Activated CD8-positive, alpha-beta T cell treated with anti-CD3 and anti-CD28 coated beads, Interleukin-2, amount 10 ng/mL, durations not matched to agents 7 days and 5 days (primary cell): ENCODE measurements at regions of chr6 and their contacts with region 1.

Region 1: DNA sequence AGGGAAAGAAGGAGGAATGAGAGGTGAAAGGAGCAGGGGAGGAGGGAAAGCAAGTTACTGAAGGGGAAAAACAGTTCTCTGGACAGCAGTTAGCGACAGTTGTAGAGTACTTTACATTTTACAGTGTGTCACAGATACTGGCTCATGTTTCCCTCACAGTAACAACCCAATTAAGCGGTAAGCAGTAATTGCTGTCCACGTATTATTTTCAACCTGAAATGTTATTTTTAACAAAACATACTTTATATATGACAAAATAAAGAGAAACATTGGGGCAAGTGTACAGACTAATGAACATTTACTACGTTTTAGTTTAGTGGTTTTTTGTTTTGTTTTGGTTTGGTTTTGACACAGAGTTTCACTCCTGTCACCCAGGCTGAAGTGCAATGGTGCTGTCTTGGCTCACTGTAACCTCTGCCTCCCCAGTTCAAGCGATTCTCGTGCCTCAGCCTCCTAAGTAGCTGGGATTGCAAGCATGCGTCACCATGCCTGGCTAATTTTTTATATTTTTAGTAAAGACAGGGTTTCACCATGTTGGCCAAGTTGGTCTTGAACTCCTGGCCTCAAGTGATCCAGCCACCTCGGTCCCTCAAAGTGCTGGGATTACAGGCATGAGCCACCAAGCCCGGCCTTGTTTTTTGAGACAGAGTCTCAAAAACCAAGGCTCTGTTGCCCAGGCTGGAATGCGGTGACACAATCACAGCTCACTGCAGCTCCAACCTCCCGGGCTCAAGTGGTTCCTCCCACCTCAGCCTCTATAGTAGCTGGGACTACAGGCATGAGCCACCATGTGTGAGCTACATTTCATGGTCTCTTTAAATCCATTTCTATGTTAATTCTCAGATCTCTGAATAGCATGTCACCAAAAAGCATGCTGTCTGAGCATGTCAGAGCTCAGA is 22.6 kb upstream of the BTN3A2 start:
- DNase-seq: no peak
- ATAC-seq: peak; percentile 25
- H3K4me3 Mint-ChIP-seq: peak overlapping the region; percentile 71
- H3K27ac Mint-ChIP-seq: peak overlapping the region; percentile 58
- H3K4me1 Mint-ChIP-seq: peaks cover 33% of the 10 kb centered on the region
- H3K27me3 Mint-ChIP-seq: peaks cover 4% of the 10 kb centered on the region

Region 2: GRCh38 chr6:26055670-26056582 is 286.4 kb before region 1 on chr6:
- CTCF ChIA-PET with region 1: no interaction called
- POLR2A ChIA-PET with region 1: no interaction called
- DNase-seq: peak; percentile 94
- ATAC-seq: peak; percentile 79
- H3K4me3 Mint-ChIP-seq: peak overlapping the region; percentile 87
- H3K27ac Mint-ChIP-seq: peak overlapping the region; percentile 100
- H3K4me1 Mint-ChIP-seq: peaks cover 41% of the 10 kb centered on the region
- H3K27me3 Mint-ChIP-seq: no peaks in the 10 kb centered on the region

Region 3: GRCh38 chr6:26122793-26123674 is 219.3 kb before region 1 on chr6:
- CTCF ChIA-PET with region 1: no interaction called
- POLR2A ChIA-PET with region 1: no interaction called
- DNase-seq: peak; percentile 98
- ATAC-seq: peak; percentile 50
- H3K4me3 Mint-ChIP-seq: peak overlapping the region; percentile 95
- H3K27ac Mint-ChIP-seq: peak overlapping the region; percentile 100
- H3K4me1 Mint-ChIP-seq: peaks cover 44% of the 10 kb centered on the region
- H3K27me3 Mint-ChIP-seq: peaks cover 1% of the 10 kb centered on the region

Region 4: GRCh38 chr6:26322645-26323482 is 19.5 kb before region 1 on chr6:
- CTCF ChIA-PET with region 1: interaction called, 62 read pairs
- POLR2A ChIA-PET with region 1: interaction called, 3 read pairs
- DNase-seq: peak; percentile 84
- ATAC-seq: peak; percentile 72
- H3K4me3 Mint-ChIP-seq: peak overlapping the region; percentile 86
- H3K27ac Mint-ChIP-seq: peak overlapping the region; percentile 86
- H3K4me1 Mint-ChIP-seq: peaks cover 36% of the 10 kb centered on the region
- H3K27me3 Mint-ChIP-seq: peaks cover 16% of the 10 kb centered on the region

Region 5: DNA sequence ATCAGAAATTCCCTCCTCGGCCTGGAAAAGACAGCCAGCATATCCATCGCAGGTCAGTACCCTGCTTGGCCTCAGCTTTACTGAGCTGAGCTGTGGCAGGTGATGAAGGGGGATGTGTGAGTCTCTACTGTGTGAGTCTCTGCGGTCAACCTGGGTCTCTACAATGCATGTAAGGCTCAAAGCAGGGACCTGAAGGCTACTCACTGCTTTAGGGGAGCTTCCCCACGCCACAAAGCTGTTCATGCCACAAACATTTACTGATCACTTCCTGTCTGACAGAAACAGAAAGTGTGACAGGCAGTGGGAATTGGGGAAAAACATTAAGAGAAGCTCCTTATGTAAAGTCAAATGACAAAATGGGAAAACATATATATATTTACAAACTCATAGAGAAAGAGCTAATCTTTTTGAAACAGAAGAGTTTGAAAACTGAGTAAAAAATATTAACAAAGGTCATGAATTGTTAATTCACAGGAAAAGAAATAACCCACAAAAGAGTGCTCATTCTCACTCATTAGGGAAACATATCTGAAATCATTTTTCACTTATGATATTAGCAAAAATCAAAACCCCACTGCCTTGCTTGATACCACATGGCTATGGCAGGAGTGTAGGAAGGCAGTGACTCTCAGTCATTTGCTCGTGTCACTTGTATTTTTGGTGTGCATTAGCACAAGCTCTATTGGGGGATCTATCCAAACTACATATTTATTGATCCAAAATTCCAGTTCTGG is 103.7 kb after region 1 on chr6:
- CTCF ChIA-PET with region 1: interaction called, 20 read pairs
- POLR2A ChIA-PET with region 1: no interaction called
- DNase-seq: peak; percentile 43
- ATAC-seq: peak; percentile 71
- H3K4me3 Mint-ChIP-seq: peak overlapping the region; percentile 24
- H3K27ac Mint-ChIP-seq: peak overlapping the region; percentile 62
- H3K4me1 Mint-ChIP-seq: peaks cover 40% of the 10 kb centered on the region
- H3K27me3 Mint-ChIP-seq: no peaks in the 10 kb centered on the region

Region 6: GRCh38 chr6:26501482-26501986 is 159.2 kb after region 1 on chr6:
- CTCF ChIA-PET with region 1: interaction called, 16 read pairs
- POLR2A ChIA-PET with region 1: no interaction called
- DNase-seq: peak; percentile 36
- ATAC-seq: peak; percentile 85
- H3K4me3 Mint-ChIP-seq: peak overlapping the region; percentile 62
- H3K27ac Mint-ChIP-seq: no peak overlapping the region
- H3K4me1 Mint-ChIP-seq: peaks cover 22% of the 10 kb centered on the region
- H3K27me3 Mint-ChIP-seq: peaks cover 36% of the 10 kb centered on the region

Region 7: GRCh38 chr6:26537846-26538571 is 195.7 kb after region 1 on chr6 and contains the start of gene HMGN4:
- CTCF ChIA-PET with region 1: interaction called, 20 read pairs
- POLR2A ChIA-PET with region 1: interaction called, 6 read pairs
- DNase-seq: peak; percentile 88
- ATAC-seq: peak; percentile 71
- H3K4me3 Mint-ChIP-seq: peak within 1 kb of the TSS; percentile 87
- H3K27ac Mint-ChIP-seq: peak within 1 kb of the TSS; percentile 99
- H3K4me1 Mint-ChIP-seq: peaks cover 58% of the 10 kb centered on the region
- H3K27me3 Mint-ChIP-seq: peaks cover 2% of the 10 kb centered on the region
- total RNA-seq, gene HMGN4: 80.8 to 84.9 TPM

Region 8: DNA sequence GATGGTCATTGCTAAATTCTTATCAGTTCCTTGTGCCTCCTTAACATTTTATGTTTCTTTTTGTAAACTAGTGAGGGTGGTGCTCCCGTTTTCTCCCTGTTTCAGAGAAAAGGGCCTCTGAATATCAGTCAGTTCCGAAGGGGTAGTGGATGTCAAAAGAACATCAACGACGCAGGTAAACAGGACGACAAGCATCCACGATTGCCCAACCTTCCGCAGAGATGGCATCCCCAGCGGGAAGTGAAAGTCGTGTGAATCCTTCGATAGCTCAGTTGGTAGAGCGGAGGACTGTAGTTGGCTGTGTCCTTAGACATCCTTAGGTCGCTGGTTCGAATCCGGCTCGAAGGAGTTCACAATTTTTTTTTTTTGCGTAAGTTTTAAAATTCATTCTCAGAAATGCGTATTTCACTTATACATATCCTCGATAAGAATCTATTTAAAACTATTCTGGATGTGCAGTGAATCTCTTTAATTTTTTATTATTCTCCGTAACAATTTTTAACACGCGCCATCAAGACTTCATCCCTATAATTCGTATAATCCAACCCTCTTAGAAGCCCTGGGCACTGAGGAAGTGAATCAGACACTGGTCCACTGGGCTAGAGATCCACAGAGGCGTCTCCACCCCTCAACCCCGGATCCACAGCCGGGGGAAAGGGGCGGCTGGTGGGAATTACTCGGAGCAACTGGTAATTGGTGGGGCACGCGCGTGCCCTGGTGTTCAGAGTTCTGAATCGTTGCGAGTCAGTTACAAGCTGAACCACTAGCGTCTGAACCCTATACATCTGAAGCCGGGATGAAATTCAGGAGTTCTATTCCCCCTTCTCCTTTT is 226.5 kb after region 1 on chr6:
- CTCF ChIA-PET with region 1: interaction called, 72 read pairs
- POLR2A ChIA-PET with region 1: interaction called, 4 read pairs
- DNase-seq: peak; percentile 97
- ATAC-seq: peak; percentile 88
- H3K4me3 Mint-ChIP-seq: peak overlapping the region; percentile 95
- H3K27ac Mint-ChIP-seq: peak overlapping the region; percentile 86
- H3K4me1 Mint-ChIP-seq: peaks cover 41% of the 10 kb centered on the region
- H3K27me3 Mint-ChIP-seq: no peaks in the 10 kb centered on the region

Region 9: GRCh38 chr6:28153546-28153945 is 1811.2 kb after region 1 on chr6:
- CTCF ChIA-PET with region 1: no interaction called
- POLR2A ChIA-PET with region 1: no interaction called
- DNase-seq: no peak
- ATAC-seq: no peak
- H3K4me3 Mint-ChIP-seq: no peak overlapping the region
- H3K27ac Mint-ChIP-seq: no peak overlapping the region
- H3K4me1 Mint-ChIP-seq: no peaks in the 10 kb centered on the region
- H3K27me3 Mint-ChIP-seq: no peaks in the 10 kb centered on the region